Activated CD4-positive, alpha-beta T cell treated with anti-CD3 and anti-CD28 coated beads, Interleukin-2, amount 10 ng/mL, durations not matched to agents 24 days and 14 days (primary cell): ENCODE measurements at regions of chr3 and their contacts with region 1.

Region 1: DNA sequence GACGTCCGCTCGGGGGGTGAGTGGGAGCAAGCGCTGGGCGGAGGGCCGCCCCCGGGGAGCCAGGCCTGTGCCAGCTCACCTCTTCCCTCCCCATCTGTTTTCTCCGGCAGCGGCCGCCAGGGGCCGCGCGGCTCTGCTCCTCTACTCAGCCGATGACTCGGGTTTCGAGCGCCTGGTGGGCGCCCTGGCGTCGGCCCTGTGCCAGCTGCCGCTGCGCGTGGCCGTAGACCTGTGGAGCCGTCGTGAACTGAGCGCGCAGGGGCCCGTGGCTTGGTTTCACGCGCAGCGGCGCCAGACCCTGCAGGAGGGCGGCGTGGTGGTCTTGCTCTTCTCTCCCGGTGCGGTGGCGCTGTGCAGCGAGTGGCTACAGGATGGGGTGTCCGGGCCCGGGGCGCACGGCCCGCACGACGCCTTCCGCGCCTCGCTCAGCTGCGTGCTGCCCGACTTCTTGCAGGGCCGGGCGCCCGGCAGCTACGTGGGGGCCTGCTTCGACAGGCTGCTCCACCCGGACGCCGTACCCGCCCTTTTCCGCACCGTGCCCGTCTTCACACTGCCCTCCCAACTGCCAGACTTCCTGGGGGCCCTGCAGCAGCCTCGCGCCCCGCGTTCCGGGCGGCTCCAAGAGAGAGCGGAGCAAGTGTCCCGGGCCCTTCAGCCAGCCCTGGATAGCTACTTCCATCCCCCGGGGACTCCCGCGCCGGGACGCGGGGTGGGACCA is 632 bp upstream of the CRELD1 start:
- DNase-seq: peak; percentile 94
- H3K4me3 Mint-ChIP-seq: peak overlapping the region; percentile 96
- H3K27ac Mint-ChIP-seq: peak overlapping the region; percentile 96
- H3K4me1 Mint-ChIP-seq: peaks cover 36% of the 10 kb centered on the region
- H3K27me3 Mint-ChIP-seq: no peaks in the 10 kb centered on the region

Region 2: DNA sequence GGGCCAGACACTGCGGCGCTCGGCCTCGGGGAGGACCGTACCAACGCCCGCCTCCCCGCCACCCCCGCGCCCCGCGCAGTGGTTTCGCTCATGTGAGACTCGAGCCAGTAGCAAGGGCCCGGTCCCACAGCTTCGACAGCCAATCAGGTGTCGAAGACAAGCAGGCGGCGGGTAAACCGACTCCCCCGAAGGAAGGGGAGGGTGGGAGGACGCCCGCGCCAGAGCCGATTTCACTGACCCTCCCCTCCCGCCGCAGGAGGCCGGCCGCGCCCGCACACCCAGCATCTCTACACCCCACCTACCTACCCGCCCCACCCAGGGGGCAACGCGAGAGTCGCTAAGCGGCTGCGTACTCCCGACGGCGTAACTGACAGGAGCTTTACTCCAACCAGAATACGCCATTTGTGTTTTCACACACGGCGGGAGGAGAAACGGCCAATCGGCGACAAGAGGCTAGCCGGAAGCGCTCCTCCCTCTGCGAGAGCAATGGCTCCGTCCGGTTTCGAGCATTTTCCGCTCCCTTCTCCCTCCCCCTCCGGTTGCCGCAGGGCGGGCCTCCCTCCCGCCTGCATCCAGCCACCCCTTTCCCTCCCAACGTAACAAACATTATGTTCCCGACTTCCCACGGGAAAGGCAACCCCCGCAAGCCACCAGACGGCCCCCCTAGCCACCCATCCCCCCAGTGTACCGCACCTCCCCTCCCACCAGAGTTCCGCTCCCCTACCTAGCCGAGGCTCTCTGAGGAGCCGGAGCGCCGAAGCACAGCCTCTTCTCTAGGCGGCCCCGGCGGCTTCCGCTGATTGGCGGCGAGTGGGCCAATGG is 536.1 kb before region 1 on chr3:
- intact Hi-C with region 1: loop called (anchors 2 kb)
- DNase-seq: peak; percentile 100
- H3K4me3 Mint-ChIP-seq: peak overlapping the region; percentile 90
- H3K27ac Mint-ChIP-seq: peak overlapping the region; percentile 99
- H3K4me1 Mint-ChIP-seq: peaks cover 59% of the 10 kb centered on the region
- H3K27me3 Mint-ChIP-seq: no peaks in the 10 kb centered on the region

Region 3: DNA sequence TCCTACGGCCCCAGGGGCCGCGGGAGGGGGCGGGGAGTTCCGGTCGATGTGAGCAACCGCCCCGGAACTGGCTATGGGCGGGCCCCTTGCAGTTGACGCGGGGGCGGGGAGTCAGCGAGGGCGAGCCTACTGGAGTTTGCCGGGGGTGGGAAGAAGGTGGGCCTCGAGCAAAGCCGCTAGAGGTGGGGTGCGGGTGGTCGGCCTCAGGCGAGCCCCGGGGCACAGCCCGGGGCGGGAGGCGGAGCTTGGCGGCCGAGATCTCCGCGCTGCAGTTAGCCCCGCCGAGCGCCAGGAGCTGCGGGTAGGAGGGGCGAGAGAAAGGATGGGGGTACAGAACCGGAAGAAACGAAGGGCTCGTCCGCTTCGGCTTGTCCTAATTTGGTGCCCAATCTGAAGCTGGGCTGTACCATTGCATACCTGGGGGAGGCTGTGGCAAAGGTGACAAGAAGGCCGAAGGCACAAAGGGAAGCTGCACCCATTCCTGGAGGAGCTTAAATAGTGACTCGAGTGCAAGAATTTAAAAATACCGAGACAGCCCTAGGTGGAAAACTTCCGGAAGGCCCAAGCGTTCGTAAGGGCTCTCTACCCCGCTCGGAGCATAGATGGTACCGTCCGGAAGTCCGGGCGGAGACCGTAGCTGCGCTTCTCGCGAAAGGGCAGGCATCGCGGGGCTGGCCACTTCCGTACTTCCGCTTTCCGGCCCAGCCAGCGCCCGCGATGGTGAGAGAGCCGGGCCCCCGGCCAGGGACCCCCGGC is 140.4 kb before region 1 on chr3 and contains the starts of genes ARPC4 and TADA3:
- intact Hi-C with region 1: loop called (anchors 2 kb)
- DNase-seq: peak; percentile 98
- H3K4me3 Mint-ChIP-seq: peak within 1 kb of the TSS; percentile 94
- H3K27ac Mint-ChIP-seq: peak within 1 kb of the TSS; percentile 100
- H3K4me1 Mint-ChIP-seq: peaks cover 47% of the 10 kb centered on the region
- H3K27me3 Mint-ChIP-seq: no peaks in the 10 kb centered on the region
- total RNA-seq, gene ARPC4: 263 and 267 TPM in 2 replicates
- total RNA-seq, gene TADA3: 63.4 and 64.6 TPM in 2 replicates

Region 4: GRCh38 chr3:9837701-9838582 is 95.1 kb before region 1 on chr3:
- intact Hi-C with region 1: no loop called
- DNase-seq: no peak
- H3K4me3 Mint-ChIP-seq: no peak overlapping the region
- H3K27ac Mint-ChIP-seq: no peak overlapping the region
- H3K4me1 Mint-ChIP-seq: peaks cover 16% of the 10 kb centered on the region
- H3K27me3 Mint-ChIP-seq: no peaks in the 10 kb centered on the region

Region 5: GRCh38 chr3:9915254-9916141 is 17.5 kb before region 1 on chr3:
- intact Hi-C with region 1: loop called (anchors 1 kb)
- DNase-seq: peak; percentile 80
- H3K4me3 Mint-ChIP-seq: peak overlapping the region; percentile 77
- H3K27ac Mint-ChIP-seq: peak overlapping the region; percentile 71
- H3K4me1 Mint-ChIP-seq: peaks cover 14% of the 10 kb centered on the region
- H3K27me3 Mint-ChIP-seq: peaks cover 2% of the 10 kb centered on the region

Region 6: DNA sequence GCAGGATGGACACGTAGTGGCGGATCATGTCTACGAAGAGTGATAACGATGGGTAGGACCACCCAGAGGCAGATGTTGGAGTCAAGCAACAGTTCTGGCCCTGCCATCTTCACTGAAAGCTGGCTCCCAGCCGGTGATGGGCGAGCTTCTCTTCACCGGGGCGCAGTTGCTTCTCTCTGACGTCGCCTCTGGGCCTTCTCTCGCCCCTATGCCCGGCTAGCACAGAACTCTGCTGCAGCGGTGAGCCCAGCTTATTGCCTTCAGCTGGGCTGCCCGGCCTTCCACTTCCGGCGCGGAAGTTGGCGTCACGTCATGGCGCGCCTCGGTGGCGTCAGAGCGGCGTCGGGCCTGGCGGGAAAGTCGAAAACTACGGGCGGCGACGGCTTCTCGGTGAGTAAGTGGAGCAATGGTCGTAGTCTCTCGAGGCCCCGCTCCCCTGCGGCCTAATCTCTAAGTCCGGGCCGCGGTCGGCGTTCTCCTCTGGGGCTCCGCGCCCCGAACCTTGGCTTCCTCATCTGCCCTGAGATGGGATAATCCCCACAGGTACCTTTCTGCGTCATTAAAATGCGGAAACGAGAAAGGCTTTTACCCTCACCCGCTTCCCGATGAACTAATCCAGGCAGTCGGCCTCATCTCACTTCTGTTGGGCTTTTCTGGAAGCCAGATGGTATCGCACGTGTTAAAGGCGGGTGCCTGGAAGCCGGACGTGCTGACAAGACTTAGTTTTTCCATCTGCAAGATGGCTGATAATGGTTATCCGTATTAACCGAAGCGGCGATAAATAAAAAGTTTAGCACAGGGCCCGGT is 93.3 kb after region 1 on chr3 and contains the start of gene FANCD2:
- intact Hi-C with region 1: loop called (anchors 1 kb)
- DNase-seq: peak; percentile 99
- H3K4me3 Mint-ChIP-seq: peak within 1 kb of the TSS; percentile 93
- H3K27ac Mint-ChIP-seq: peak within 1 kb of the TSS; percentile 98
- H3K4me1 Mint-ChIP-seq: peaks cover 18% of the 10 kb centered on the region
- H3K27me3 Mint-ChIP-seq: no peaks in the 10 kb centered on the region
- total RNA-seq, gene FANCD2: 71.4 and 73.8 TPM in 2 replicates

Region 7: DNA sequence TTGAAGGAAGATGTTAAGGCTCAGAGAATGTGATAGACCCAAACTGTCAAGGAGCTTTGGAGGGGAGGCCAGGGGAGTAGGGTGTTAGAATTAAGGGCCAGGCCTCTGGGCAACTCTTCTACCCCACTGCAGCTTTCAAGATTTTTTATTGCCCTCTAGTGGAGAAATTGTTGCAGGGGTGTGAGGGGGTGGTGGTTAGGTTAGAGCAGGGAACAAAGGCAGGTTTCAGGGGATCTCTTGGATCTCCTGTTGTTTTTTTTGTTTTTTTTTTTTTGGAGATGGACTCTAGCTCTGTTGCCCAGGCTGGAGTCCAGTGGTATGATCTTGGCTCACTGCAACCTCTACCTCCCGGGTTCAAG is 389.3 kb after region 1 on chr3:
- intact Hi-C with region 1: loop called (anchors 2 kb)
- DNase-seq: peak; percentile 80
- H3K4me3 Mint-ChIP-seq: no peak overlapping the region
- H3K27ac Mint-ChIP-seq: no peak overlapping the region
- H3K4me1 Mint-ChIP-seq: peaks cover 23% of the 10 kb centered on the region
- H3K27me3 Mint-ChIP-seq: peaks cover 19% of the 10 kb centered on the region